ENCODE measurements at regions of chr20 and their contacts with region 1.

Region 1: DNA sequence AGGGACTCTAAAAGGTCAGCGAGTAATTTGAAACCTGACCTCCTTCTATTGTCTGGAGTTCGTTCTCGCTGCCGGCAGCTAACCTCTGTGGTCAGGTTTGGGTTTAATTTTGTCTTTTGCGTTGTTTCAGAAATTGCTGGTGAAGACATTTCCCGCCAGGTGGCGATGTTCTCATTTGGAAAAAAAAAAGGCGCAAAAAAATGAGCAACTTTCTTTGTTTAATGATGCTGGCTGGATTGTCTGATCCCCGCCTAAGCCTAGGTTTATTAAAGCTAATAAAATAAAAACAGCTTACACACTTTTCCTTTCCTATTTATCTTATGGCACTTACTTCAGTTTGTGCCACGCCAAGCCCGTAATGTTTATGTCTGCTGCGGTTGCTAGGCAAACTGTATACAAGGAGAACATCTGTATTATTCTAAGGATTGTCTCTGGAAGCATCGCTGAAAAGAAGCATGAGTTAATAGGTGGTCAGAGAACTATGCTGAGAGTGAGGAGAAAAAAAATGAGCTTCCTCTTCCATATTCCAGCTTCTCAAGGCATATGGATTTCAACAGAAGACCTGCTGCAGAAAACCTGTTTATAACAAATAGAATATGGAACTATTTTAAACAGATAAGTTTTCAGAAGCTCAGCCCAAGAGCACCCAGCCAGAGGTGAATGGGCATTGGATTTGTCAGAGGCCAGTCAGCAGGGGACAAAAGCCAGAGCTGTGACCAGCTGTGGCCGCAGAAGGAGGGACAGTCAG is 205.7 kb downstream of the DOK5 start:
- DNase-seq: peak; percentile 52
- H3K4me3 Mint-ChIP-seq: no peak overlapping the region
- H3K27ac Mint-ChIP-seq: no peak overlapping the region
- H3K4me1 Mint-ChIP-seq: peaks cover 6% of the 10 kb centered on the region
- H3K27me3 Mint-ChIP-seq: peaks cover 63% of the 10 kb centered on the region
- CTCF ChIP-seq: peak; percentile 71

Region 2: GRCh38 chr20:54649511-54649962 is 31.5 kb before region 1 on chr20:
- CTCF ChIA-PET with region 1: interaction called, 15 read pairs
- POLR2A ChIA-PET with region 1: no interaction called
- intact Hi-C with region 1: no loop called
- DNase-seq: peak; percentile 82
- H3K4me3 Mint-ChIP-seq: no peak overlapping the region
- H3K27ac Mint-ChIP-seq: no peak overlapping the region
- H3K4me1 Mint-ChIP-seq: no peaks in the 10 kb centered on the region
- H3K27me3 Mint-ChIP-seq: peaks cover 39% of the 10 kb centered on the region
- CTCF ChIP-seq: peak; percentile 71

Region 3: GRCh38 chr20:54692168-54692887 is 11.3 kb after region 1 on chr20:
- CTCF ChIA-PET with region 1: interaction called, 53 read pairs
- POLR2A ChIA-PET with region 1: no interaction called
- intact Hi-C with region 1: no loop called
- DNase-seq: no peak
- H3K4me3 Mint-ChIP-seq: no peak overlapping the region
- H3K27ac Mint-ChIP-seq: no peak overlapping the region
- H3K4me1 Mint-ChIP-seq: no peaks in the 10 kb centered on the region
- H3K27me3 Mint-ChIP-seq: peaks cover 32% of the 10 kb centered on the region
- CTCF ChIP-seq: no peak

Region 4: DNA sequence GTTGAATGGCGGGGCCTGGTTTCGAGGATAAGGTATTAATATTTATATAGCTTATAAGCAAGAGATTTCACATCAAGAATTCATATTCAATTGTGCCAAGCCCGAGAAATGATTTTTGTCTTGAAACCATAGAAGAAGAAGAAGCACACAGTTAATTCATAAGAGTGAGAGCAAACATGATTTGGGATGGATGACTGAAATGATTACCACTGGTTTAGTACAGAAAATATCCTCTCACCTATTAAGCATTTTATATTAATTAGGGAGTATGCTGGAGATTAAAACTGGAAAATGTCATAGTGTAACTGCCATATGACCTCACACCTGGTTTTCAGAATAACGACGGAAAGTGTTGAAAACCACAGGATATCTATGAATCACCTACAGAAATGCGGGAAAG is 40.4 kb after region 1 on chr20:
- CTCF ChIA-PET with region 1: interaction called, 18 read pairs
- POLR2A ChIA-PET with region 1: interaction called, 3 read pairs
- intact Hi-C with region 1: no loop called
- DNase-seq: no peak
- H3K4me3 Mint-ChIP-seq: no peak overlapping the region
- H3K27ac Mint-ChIP-seq: no peak overlapping the region
- H3K4me1 Mint-ChIP-seq: no peaks in the 10 kb centered on the region
- H3K27me3 Mint-ChIP-seq: no peaks in the 10 kb centered on the region
- CTCF ChIP-seq: no peak

Region 5: DNA sequence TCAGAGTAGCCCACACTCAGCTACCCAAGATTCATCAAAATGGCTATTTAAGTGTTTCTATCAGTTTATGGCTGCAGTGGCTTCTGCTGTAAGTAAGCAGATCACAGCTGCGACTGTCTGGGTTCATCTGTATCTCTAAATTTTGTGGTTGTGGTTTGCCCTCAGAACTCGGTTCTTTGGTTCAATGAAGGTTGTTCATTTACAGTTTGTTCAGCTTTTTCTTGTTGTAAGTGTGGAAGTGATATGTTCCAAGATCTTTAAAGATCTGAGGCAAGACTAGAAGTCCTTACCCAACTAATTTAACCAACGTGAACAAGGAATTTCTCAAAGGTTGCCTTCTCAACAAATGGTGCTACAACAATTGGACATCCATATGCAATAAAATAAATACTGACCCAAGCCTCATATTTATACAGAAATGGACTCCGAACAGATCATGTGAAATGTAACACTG is 78.7 kb after region 1 on chr20:
- CTCF ChIA-PET with region 1: no interaction called
- POLR2A ChIA-PET with region 1: no interaction called
- intact Hi-C with region 1: no loop called
- DNase-seq: no peak
- H3K4me3 Mint-ChIP-seq: no peak overlapping the region
- H3K27ac Mint-ChIP-seq: no peak overlapping the region
- H3K4me1 Mint-ChIP-seq: no peaks in the 10 kb centered on the region
- H3K27me3 Mint-ChIP-seq: no peaks in the 10 kb centered on the region
- CTCF ChIP-seq: no peak

Region 6: DNA sequence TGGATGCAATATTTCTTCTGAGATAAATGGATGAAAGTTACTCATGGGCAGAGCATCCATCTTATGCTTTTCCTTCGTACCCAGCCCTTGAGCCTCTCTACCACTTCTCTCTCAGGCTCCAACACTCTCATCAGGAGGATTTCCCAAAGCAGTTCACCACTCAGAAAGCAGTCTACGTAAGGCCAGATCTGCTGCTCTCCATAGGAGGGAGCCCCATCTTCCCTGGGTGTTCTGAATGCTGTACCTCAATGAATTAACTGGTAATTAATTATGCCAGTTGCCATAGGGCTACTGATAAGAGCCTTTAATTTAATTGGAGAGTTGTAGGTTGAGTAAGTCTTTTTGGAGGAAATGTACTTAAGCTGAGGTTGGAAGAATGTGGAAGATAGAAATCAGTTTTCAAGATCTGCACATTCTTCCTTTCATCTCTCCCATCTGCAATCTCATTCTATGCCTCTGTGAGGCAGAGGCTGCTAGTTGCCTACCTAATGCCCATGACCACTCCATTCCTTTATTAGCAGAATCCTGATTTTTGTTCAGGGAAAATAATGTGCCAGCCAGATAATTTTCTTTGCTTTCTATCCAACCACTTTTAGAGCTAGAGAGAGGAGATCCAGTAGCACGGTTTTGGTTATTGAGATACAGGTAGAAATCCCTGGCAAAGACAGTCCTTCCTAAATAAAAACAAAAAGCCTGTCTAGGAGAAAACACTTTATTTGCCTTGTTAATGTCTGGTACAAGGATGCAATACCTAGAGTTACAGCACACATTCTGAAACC is 127.2 kb after region 1 on chr20:
- CTCF ChIA-PET with region 1: interaction called, 11 read pairs
- POLR2A ChIA-PET with region 1: no interaction called
- intact Hi-C with region 1: no loop called
- DNase-seq: no peak
- H3K4me3 Mint-ChIP-seq: no peak overlapping the region
- H3K27ac Mint-ChIP-seq: no peak overlapping the region
- H3K4me1 Mint-ChIP-seq: no peaks in the 10 kb centered on the region
- H3K27me3 Mint-ChIP-seq: no peaks in the 10 kb centered on the region
- CTCF ChIP-seq: no peak

Region 7: GRCh38 chr20:56187534-56188198 is 1506.6 kb after region 1 on chr20:
- CTCF ChIA-PET with region 1: interaction called, 17 read pairs
- POLR2A ChIA-PET with region 1: no interaction called
- intact Hi-C with region 1: no loop called
- DNase-seq: peak; percentile 62
- H3K4me3 Mint-ChIP-seq: no peak overlapping the region
- H3K27ac Mint-ChIP-seq: no peak overlapping the region
- H3K4me1 Mint-ChIP-seq: peaks cover 6% of the 10 kb centered on the region
- H3K27me3 Mint-ChIP-seq: no peaks in the 10 kb centered on the region
- CTCF ChIP-seq: peak; percentile 48

Measured in MCF 10A (cell line).